ENCODE measurements at regions of chr17 and their contacts with region 1.

Region 1: DNA sequence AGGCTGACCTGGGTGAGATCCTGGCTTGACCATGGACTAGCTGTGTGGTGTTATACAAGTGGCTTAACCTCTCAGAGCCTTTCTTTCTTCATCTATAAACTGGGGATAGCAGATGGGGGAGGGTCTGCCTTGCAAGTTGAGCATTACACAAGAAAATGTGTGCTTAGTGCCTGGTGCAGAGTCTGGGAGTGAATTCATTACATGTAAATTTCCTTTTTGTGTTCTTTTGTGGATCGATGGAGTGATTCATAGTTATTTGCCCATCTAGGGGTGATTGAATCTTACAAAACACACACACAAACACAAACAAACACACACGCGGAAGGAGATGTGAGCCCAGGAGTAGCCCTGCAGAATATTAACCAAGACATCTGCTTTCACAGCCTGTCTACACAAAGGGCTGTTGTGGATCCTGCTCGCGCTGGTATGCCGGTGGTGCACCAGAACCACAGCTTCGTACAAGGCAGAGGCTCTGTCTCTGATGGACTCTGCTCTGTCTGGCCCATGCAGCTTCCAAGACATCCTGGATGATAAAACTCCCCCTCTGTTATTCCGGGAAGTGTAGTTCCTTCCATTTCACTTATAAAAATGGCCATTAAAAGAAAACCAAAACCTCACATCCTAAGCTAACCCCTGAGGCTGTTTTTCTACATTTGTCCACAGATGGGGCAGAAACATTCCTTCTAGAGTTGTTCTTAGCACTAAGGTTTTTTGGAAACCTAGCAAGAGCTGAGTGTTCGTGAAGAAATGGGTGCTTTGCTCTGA is 86.1 kb downstream of the UTP18 start:
- DNase-seq: no peak
- H3K4me3 ChIP-seq: no peak overlapping the region
- H3K27ac ChIP-seq: no peak overlapping the region
- H3K4me1 ChIP-seq: no peaks in the 10 kb centered on the region
- CTCF ChIP-seq: no peak

Region 2: GRCh38 chr17:51402899-51403298 is 56.5 kb after region 1 on chr17:
- CTCF ChIA-PET with region 1: interaction called, 10 read pairs
- POLR2A ChIA-PET with region 1: no interaction called
- intact Hi-C with region 1: no loop called
- DNase-seq: no peak
- H3K4me3 ChIP-seq: no peak overlapping the region
- H3K27ac ChIP-seq: no peak overlapping the region
- H3K4me1 ChIP-seq: no peaks in the 10 kb centered on the region
- CTCF ChIP-seq: no peak

Measured in OCI-LY7 (cell line).